Naive thymus-derived CD4-positive, alpha-beta T cell (primary cell): ENCODE measurements at regions of chr5 and their contacts with region 1.

Region 1: DNA sequence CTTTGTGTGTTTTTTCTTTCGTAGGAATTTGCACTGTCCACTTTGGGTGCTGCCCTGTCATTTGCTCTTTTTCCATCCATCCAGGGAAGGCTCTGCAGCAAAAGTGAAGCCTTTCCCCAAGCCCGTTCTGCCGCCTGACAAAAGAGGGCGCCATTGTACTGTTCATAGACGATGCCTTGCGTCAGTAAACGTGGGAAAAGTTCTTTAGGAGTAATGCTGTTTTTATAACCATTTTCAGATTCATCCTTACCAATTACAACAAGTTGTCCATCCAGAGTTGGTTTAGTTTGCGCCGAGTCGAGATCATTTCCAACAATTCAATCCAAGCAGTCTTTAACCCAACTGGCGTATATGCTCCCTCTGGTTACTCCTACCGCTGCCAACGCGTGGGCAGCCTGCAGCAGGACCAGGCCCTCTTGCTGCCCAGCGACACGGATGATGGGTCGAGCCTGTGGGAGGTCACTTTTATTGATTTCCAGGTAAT is 34.3 kb upstream of the RPS23 start:
- DNase-seq: peak in 4 of 9 donors; percentile 5 to 52 (median 6)
- ATAC-seq: no peak
- H3K4me3 ChIP-seq: no peak overlapping the region
- H3K4me3 Mint-ChIP-seq: no peak overlapping the region
- H3K27ac ChIP-seq: no peak overlapping the region
- H3K27ac Mint-ChIP-seq: no peak overlapping the region
- H3K4me1 ChIP-seq: no peaks in the 10 kb centered on the region
- H3K4me1 Mint-ChIP-seq: peaks cover 0 to 7% (median 0%) of the 10 kb centered on the region in 7 donors
- H3K27me3 ChIP-seq: no peaks in the 10 kb centered on the region
- H3K27me3 Mint-ChIP-seq: peaks cover 0 to 4% (median 0%) of the 10 kb centered on the region in 5 donors

Region 2: GRCh38 chr5:82339792-82340191 is 27.4 kb after region 1 on chr5:
- CTCF ChIA-PET with region 1: no interaction called
- POLR2A ChIA-PET with region 1: no interaction called
- intact Hi-C with region 1: no loop called
- DNase-seq: no peak
- ATAC-seq: no peak
- H3K4me3 ChIP-seq: no peak overlapping the region
- H3K4me3 Mint-ChIP-seq: no peak overlapping the region
- H3K27ac ChIP-seq: no peak overlapping the region
- H3K27ac Mint-ChIP-seq: no peak overlapping the region
- H3K4me1 ChIP-seq: no peaks in the 10 kb centered on the region
- H3K4me1 Mint-ChIP-seq: peaks cover 0 to 20% (median 0%) of the 10 kb centered on the region in 7 donors
- H3K27me3 ChIP-seq: no peaks in the 10 kb centered on the region
- H3K27me3 Mint-ChIP-seq: peaks cover 2 to 20% (median 18%) of the 10 kb centered on the region in 5 donors

Region 3: GRCh38 chr5:83564069-83564749 is 1251.8 kb after region 1 on chr5:
- CTCF ChIA-PET with region 1: no interaction called
- POLR2A ChIA-PET with region 1: no interaction called
- intact Hi-C with region 1: loop called (anchors 1 kb)
- DNase-seq: peak in 5 of 9 donors; percentile 27 to 40 (median 31)
- ATAC-seq: peak; percentile 42
- H3K4me3 ChIP-seq: no peak overlapping the region
- H3K4me3 Mint-ChIP-seq: no peak overlapping the region
- H3K27ac ChIP-seq: no peak overlapping the region
- H3K27ac Mint-ChIP-seq: no peak overlapping the region
- H3K4me1 ChIP-seq: no peaks in the 10 kb centered on the region
- H3K4me1 Mint-ChIP-seq: no peaks in the 10 kb centered on the region
- H3K27me3 ChIP-seq: peaks cover 0 to 4% of the 10 kb centered on the region in 2 donors
- H3K27me3 Mint-ChIP-seq: peaks cover 18 to 34% (median 27%) of the 10 kb centered on the region in 5 donors